CD4-positive, alpha-beta T cell (primary cell): ENCODE measurements at regions of chr5 and their contacts with region 1.

Region 1: GRCh38 chr5:125950012-125950411 is 473.2 kb upstream of the GRAMD2B start:
- DNase-seq: no peak
- ATAC-seq: no peak
- H3K4me3 ChIP-seq: no peak overlapping the region
- H3K4me3 Mint-ChIP-seq: no peak overlapping the region
- H3K27ac ChIP-seq: no peak overlapping the region
- H3K27ac Mint-ChIP-seq: no peak overlapping the region
- H3K4me1 ChIP-seq: no peaks in the 10 kb centered on the region
- H3K4me1 Mint-ChIP-seq: no peaks in the 10 kb centered on the region
- H3K27me3 ChIP-seq: no peaks in the 10 kb centered on the region
- H3K27me3 Mint-ChIP-seq: no peaks in the 10 kb centered on the region
- CTCF ChIP-seq: no peak

Region 2: GRCh38 chr5:125928663-125929062 is 21.3 kb before region 1 on chr5:
- CTCF ChIA-PET with region 1: no interaction called
- POLR2A ChIA-PET with region 1: no interaction called
- intact Hi-C with region 1: loop called in 1 of 2 experiments (anchors 1 kb)
- DNase-seq: no peak
- ATAC-seq: no peak
- H3K4me3 ChIP-seq: no peak overlapping the region
- H3K4me3 Mint-ChIP-seq: no peak overlapping the region
- H3K27ac ChIP-seq: no peak overlapping the region
- H3K27ac Mint-ChIP-seq: no peak overlapping the region
- H3K4me1 ChIP-seq: no peaks in the 10 kb centered on the region
- H3K4me1 Mint-ChIP-seq: no peaks in the 10 kb centered on the region
- H3K27me3 ChIP-seq: no peaks in the 10 kb centered on the region
- H3K27me3 Mint-ChIP-seq: no peaks in the 10 kb centered on the region
- CTCF ChIP-seq: no peak